GM10248 (cell line): ENCODE measurements at regions of chr6 and their contacts with region 1.

Region 1: DNA sequence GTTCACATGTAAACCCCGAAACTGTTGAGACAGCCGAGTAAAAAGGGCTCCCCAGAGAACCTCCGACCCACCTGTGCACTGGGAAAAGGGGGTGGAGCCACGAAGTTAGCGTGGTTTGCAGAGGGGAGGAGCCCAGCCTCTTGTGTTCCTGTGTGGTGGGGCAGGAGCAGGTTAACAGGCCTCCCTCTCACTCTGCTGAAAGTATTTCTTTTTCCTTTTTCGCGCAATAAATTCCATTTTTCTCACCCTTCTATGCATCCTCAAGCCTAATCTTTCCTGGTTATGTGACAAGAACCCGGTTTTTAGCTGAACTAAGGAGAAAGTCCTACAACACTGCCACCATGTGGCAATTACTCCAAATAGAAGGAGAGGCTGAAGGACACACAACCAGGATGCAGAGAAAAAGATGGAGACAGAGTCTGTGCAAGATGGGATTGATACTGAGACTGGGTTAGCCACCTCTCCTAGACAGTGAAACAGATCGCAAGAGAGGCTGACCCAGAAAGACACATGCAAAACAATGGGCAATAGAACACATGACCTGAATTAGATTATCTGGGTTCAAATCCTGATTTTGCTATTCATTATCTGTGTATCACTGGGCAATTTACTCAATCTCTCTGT is 168.7 kb upstream of the PRSS16 start:
- DNase-seq: peak; percentile 43
- CTCF ChIP-seq: peak; percentile 71

Region 2: DNA sequence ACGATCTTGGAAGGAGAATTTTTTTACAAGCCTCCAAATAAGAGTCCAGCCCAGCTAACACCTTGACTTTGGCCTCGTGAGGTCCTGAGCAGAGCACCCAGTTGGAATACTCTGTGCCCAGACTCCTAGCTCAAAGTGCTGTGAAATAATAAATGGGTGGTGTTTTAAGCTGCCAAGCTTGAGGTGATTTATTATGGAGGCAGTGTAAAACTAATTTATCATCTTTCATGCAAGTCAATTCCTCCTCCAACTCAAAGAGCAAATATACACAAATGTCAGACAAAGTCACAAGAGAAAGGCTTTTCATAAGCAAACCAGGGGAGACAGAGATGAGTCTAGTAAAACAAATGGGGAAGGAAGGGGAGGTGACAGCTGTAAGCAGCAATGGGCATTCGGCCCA is 469.4 kb before region 1 on chr6:
- CTCF ChIA-PET with region 1: interaction called, 12 read pairs
- POLR2A ChIA-PET with region 1: no interaction called
- DNase-seq: no peak
- CTCF ChIP-seq: no peak

Region 3: DNA sequence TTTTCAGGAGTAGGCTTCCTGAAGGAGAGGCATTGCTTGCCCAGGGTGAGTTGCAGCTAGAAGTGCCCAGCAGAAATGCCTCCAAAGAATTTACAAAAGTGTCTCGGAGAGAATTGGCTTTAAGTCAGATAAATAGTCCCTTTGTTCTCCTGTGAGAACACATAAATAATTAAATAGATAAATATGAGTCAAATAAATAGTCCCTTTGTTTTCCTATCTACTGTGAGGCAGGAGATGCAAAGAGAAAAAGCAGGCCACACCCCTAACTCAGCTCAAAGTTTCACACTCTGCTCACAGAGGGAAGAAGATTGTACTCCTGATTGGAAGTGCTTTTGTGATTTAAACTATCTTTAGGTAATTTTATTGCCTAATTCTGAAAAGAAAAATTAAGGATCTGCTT is 12.0 kb before region 1 on chr6:
- CTCF ChIA-PET with region 1: interaction called, 11 read pairs
- POLR2A ChIA-PET with region 1: no interaction called
- DNase-seq: no peak
- CTCF ChIP-seq: no peak

Region 4: DNA sequence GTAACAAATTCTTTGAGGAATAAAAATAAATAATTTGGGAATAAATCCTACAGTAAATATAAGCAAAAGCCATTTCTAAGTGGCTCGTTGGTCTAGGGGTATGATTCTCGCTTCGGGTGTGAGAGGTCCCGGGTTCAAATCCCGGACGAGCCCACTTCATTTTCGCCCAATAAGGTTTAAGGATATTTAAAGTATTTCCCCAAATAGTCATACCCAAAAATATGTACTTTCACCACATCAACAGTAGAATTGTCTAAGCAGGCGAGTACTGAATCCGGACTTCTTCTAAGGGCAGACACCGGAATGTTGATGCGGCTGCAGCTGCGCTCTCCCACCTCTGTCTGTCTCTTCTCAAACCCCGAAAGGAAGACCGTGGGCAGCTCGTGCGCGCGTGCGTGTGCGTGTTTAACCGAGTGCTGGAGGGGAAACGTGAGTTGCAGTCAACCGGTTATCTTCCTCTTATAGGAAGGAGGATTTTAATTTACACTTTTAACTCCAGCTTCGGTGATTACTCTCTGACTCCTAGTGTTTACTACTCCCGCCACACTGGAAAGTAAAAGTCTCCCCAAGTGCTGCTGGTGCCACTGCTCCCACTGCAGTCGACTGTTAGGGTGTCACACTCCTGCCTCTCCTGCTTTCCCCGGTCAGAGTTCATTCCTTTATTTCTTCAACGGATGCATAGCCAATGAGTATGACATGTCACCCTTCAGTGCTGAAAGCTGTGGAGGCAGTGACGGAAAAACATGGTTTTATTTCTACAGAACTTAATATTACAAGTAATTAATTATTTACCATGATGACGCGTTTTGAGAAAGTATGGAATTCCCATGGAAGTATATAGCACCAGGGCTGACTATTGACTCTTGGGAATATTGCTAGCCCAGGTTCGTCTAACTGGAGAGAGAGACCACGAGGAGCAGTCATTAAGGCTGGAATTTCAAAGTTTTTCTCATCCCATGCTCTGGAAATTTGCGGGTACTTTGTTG is 13.1 kb after region 1 on chr6:
- CTCF ChIA-PET with region 1: interaction called, 16 read pairs
- POLR2A ChIA-PET with region 1: no interaction called
- DNase-seq: peak; percentile 52
- CTCF ChIP-seq: no peak

Region 5: GRCh38 chr6:27146706-27147505 is 68.1 kb after region 1 on chr6:
- CTCF ChIA-PET with region 1: no interaction called
- POLR2A ChIA-PET with region 1: no interaction called
- DNase-seq: peak; percentile 95
- CTCF ChIP-seq: no peak

Region 6: DNA sequence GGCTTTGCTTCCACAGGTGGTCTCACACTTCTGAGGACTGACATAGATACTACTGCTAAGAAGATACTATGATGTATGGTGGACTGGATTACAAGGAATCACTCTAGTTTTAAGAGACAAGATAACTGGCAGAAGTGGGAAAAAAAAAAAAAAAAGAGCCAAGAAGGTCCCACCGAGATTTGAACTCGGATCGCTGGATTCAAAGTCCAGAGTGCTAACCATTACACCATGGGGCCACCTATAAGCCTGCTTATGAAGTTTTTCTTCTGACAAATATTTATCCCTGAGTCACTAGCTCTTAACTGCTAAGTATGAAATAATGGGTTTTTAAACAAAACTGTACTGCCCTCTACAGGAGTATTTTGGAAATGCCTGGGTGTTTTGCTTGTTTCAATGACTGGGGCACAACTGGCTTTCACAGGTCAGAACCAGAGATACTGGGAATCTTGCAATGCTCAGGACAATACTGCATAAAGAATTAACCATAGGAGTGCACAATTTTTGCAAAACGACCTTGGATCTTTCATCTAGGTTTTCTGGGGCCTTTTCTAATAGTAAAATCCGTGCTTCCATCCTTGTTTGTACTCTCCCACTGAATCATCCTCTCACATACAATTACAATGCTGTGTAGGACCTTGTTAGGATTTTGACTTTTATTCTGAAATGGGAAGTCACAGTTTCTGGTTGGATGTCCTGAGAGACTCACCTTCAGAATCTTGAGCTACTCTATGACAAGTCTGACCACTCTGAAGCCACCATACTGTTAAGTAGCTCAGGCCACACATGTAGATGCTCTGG is 717.0 kb after region 1 on chr6:
- CTCF ChIA-PET with region 1: no interaction called
- POLR2A ChIA-PET with region 1: no interaction called
- DNase-seq: peak; percentile 63
- CTCF ChIP-seq: peak; percentile 76